H1 (cell line): ENCODE measurements at regions of chr11 and their contacts with region 1.

Region 1: DNA sequence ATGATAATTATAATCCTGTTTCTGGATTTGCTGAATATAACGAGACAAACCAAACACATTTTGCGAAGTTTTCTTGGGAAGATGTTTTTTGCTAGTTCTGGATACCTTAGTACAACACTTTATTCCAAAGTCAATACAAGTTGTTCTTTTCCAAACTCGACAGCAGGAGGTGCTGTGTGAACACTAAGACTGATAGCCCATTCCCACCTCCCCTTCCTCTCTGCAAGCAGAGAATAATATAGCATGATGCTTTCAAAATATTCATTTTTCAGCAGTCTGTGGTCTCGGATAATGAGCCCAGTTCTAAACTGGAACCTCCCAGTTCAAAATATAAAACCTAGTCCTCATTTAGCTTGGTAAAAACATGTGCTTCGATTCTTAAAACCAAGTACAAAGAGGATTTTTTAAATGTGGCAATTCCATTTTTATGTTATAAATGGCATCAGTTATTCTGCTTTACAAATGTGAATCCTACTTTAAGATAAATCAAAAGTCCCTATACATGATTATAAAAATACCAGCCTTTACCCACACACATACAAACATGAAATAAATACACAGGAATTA is 129.1 kb downstream of the DCDC1 start:
- DNase-seq: no peak
- H3K4me3 ChIP-seq: no peak overlapping the region
- H3K27ac ChIP-seq: no peak overlapping the region
- H3K4me1 ChIP-seq: peaks cover 0 to 13% (median 5%) of the 10 kb centered on the region in 4 experiments; a peak in 3 of 7 replicates
- H3K27me3 ChIP-seq: no peaks in the 10 kb centered on the region
- CTCF ChIP-seq: peak in 2 of 3 experiments; percentile 53 to 78; a peak in 2 of 4 replicates
- EP300 ChIP-seq: no peak
- POLR2A ChIP-seq: no peak
- RAD21 ChIP-seq: peak; percentile 81 to 86

Region 2: GRCh38 chr11:31107062-31107461 is 133.4 kb before region 1 on chr11:
- CTCF ChIA-PET with region 1: interaction called, 35 read pairs
- POLR2A ChIA-PET with region 1: no interaction called
- DNase-seq: peak; percentile 36 to 88
- H3K4me3 ChIP-seq: no peak overlapping the region
- H3K27ac ChIP-seq: no peak overlapping the region
- H3K4me1 ChIP-seq: peaks cover 0 to 5% (median 1%) of the 10 kb centered on the region in 4 experiments; a peak in 2 of 7 replicates
- H3K27me3 ChIP-seq: no peaks in the 10 kb centered on the region
- CTCF ChIP-seq: peak; percentile 50 to 85 (median 84)
- EP300 ChIP-seq: no peak
- POLR2A ChIP-seq: no peak
- RAD21 ChIP-seq: peak; percentile 98 to 99

Region 3: GRCh38 chr11:31254431-31254830 is 14.0 kb after region 1 on chr11:
- CTCF ChIA-PET with region 1: interaction called, 10 read pairs
- POLR2A ChIA-PET with region 1: no interaction called
- DNase-seq: no peak
- H3K4me3 ChIP-seq: no peak overlapping the region
- H3K27ac ChIP-seq: no peak overlapping the region
- H3K4me1 ChIP-seq: no peaks in the 10 kb centered on the region
- H3K27me3 ChIP-seq: peaks cover 0 to 1% (median 0%) of the 10 kb centered on the region in 4 experiments; a peak in 1 of 7 replicates
- CTCF ChIP-seq: no peak
- EP300 ChIP-seq: no peak
- POLR2A ChIP-seq: no peak
- RAD21 ChIP-seq: no peak